ENCODE measurements at regions of chr10 and their contacts with region 1.

Region 1: GRCh38 chr10:35246770-35247343 is 89.5 kb upstream of the CCNY start:
- DNase-seq: no peak
- H3K4me3 ChIP-seq: no peak overlapping the region
- H3K27ac ChIP-seq: no peak overlapping the region
- H3K4me1 ChIP-seq: no peaks in the 10 kb centered on the region
- H3K27me3 ChIP-seq: no peaks in the 10 kb centered on the region
- CTCF ChIP-seq: no peak

Region 2: DNA sequence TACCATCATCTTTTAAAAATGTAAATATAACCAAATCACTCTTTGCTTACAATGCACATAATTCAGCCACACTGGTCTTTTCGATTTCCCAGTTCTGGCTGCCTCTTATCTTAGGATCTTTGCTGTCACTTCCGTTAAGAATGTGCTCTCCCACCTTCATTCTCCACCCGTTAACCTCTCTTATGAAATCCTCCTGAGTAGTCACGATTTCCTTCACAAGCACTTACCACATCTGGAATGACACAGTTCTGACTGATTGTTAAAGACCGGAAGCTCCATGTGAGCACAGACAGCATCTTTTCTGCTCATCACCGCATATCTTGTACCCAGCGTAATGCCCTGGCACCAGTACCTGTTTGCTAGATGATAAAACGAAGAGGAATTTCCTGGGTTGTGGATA is 241.0 kb before region 1 on chr10:
- intact Hi-C with region 1: no loop called
- DNase-seq: no peak
- H3K4me3 ChIP-seq: no peak overlapping the region
- H3K27ac ChIP-seq: no peak overlapping the region
- H3K4me1 ChIP-seq: no peaks in the 10 kb centered on the region
- H3K27me3 ChIP-seq: no peaks in the 10 kb centered on the region
- CTCF ChIP-seq: no peak

Region 3: DNA sequence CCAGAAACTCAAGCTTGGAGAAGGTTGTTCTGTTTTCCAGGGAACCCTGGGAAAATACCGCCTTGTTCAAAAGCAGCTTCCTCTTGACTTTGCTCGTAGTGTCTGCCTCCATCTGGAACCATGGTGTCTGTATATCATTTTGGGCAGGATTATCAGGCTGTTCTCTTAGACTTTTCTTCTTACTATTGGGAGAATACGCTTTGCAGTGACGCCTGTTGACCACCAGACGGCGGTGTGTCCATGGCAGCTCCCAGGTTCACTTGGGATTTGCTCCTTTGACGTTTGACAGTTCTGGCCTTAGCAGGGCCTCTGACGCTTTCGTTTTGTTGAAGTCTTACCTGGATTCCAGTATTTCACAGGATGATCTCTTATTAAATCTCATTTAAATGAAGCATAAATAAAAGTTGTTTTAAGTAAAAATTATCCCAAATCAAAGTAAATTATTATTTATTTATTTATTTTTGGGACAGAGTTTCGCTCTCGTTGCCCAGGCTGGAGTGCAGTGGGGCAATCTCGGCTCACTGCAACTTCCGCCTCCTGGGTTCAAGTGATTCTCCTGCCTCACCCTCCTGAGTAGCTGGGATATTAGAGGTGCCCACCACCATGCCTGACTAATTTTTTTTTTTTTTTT is 316.5 kb after region 1 on chr10:
- intact Hi-C with region 1: loop called (anchors 10 kb)
- DNase-seq: peak in 1 of 2 donors; percentile 71
- H3K4me3 ChIP-seq: no peak overlapping the region
- H3K27ac ChIP-seq: peak overlapping the region in 1 of 2 donors; percentile 3
- H3K4me1 ChIP-seq: peaks cover 0 to 22% of the 10 kb centered on the region in 2 donors
- H3K27me3 ChIP-seq: no peaks in the 10 kb centered on the region
- CTCF ChIP-seq: peak; percentile 77 to 99 (median 96)

Region 4: DNA sequence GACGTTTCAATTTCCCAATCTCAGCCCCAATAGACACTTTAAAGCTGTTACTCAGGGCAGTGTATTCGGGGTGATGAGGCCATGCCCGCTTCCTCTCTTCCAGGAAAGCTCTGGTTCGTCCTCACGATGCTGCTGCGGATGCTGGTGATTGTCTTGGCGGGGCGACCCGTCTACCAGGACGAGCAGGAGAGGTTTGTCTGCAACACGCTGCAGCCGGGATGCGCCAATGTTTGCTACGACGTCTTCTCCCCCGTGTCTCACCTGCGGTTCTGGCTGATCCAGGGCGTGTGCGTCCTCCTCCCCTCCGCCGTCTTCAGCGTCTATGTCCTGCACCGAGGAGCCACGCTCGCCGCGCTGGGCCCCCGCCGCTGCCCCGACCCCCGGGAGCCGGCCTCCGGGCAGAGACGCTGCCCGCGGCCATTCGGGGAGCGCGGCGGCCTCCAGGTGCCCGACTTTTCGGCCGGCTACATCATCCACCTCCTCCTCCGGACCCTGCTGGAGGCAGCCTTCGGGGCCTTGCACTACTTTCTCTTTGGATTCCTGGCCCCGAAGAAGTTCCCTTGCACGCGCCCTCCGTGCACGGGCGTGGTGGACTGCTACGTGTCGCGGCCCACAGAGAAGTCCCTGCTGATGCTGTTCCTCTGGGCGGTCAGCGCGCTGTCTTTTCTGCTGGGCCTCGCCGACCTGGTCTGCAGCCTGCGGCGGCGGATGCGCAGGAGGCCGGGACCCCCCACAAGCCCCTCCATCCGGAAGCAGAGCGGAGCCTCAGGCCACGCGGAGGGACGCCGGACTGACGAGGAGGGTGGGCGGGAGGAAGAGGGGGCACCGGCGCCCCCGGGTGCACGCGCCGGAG is 360.8 kb after region 1 on chr10:
- intact Hi-C with region 1: loop called (anchors 10 kb)
- DNase-seq: no peak
- H3K4me3 ChIP-seq: peak overlapping the region; percentile 51 to 62
- H3K27ac ChIP-seq: no peak overlapping the region
- H3K4me1 ChIP-seq: peaks cover 0 to 4% of the 10 kb centered on the region in 2 donors
- H3K27me3 ChIP-seq: no peaks in the 10 kb centered on the region
- CTCF ChIP-seq: no peak

Measured in ascending aorta (tissue), 2 donors.